Endothelial cell of umbilical vein (primary cell): ENCODE measurements at regions of chr1 and their contacts with region 1.

Region 1: GRCh38 chr1:236795035-236795756 is at the start of gene MTR:
- DNase-seq: peak; percentile 98
- H3K4me3 ChIP-seq: peak within 1 kb of the TSS; percentile 50 to 92 (median 85)
- H3K27ac ChIP-seq: peak within 1 kb of the TSS; percentile 39
- H3K4me1 ChIP-seq: peaks cover 11% of the 10 kb centered on the region
- H3K27me3 ChIP-seq: no peaks in the 10 kb centered on the region
- CTCF ChIP-seq: no peak
- POLR2A ChIP-seq: peak; percentile 89
- total RNA-seq, gene MTR: 41.8 and 45.2 TPM in 2 replicates

Region 2: GRCh38 chr1:236142253-236143103 is 652.7 kb before region 1 on chr1 and contains the start of gene GPR137B:
- CTCF ChIA-PET with region 1: no interaction called
- POLR2A ChIA-PET with region 1: no interaction called
- dilution Hi-C with region 1: no loop called
- intact Hi-C with region 1: loop called (anchors 5 kb)
- DNase-seq: peak; percentile 55
- H3K4me3 ChIP-seq: peak within 1 kb of the TSS; percentile 69 to 87 (median 85)
- H3K27ac ChIP-seq: no peak within 1 kb of the TSS
- H3K4me1 ChIP-seq: peaks cover 16% of the 10 kb centered on the region
- H3K27me3 ChIP-seq: peaks cover 10 to 14% of the 10 kb centered on the region in 2 experiments
- CTCF ChIP-seq: no peak
- POLR2A ChIP-seq: no peak
- total RNA-seq, gene GPR137B: 11.9 and 12.1 TPM in 2 replicates

Region 3: DNA sequence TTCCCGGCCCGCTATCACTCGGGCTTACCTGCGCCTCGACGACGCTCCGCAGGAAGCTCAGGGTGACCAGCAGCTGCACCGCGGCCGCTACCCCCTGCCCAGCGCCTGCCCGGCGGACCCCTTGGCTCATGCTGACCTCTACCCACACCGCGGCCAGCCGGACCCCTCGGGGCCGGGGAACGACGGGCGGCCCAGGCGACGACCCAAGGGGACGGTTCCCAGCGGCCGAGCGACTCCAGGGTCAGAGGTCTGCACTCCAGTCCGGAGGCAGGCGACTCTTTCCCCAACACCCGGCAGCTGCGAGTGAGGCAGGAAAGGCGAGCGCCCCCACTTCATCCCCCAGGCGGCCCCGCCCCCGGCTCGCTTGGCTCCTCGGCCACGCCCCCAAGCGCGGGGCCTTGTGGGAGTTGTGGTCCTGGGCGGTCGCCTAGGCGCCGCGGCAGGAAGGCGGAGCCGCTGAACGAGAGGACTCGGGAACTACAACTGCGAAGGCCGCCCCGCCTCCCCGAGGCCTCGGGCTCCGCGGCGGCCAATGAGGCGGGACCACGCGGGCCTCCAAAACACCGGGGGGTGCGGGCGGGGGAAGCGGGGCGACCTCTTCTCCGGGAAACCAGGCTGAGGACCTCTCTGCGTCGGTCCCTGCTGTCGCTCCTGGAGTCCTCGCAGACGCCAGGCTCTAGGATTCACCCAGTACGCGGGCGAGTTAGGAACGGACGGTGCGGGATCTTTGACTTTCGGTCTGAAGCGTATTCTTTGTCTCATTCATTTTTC is 513.4 kb before region 1 on chr1 and contains the start of gene ERO1B:
- CTCF ChIA-PET with region 1: no interaction called
- POLR2A ChIA-PET with region 1: no interaction called
- dilution Hi-C with region 1: no loop called
- intact Hi-C with region 1: loop called (anchors 5 kb)
- DNase-seq: peak; percentile 95
- H3K4me3 ChIP-seq: peak within 1 kb of the TSS; percentile 39 to 99 (median 65)
- H3K27ac ChIP-seq: no peak within 1 kb of the TSS
- H3K4me1 ChIP-seq: peaks cover 3% of the 10 kb centered on the region
- H3K27me3 ChIP-seq: peaks cover 16 to 22% of the 10 kb centered on the region in 2 experiments
- CTCF ChIP-seq: peak in 1 of 2 donors; percentile 2
- POLR2A ChIP-seq: peak; percentile 21
- total RNA-seq, gene ERO1B: 3.6 and 5.1 TPM in 2 replicates

Region 4: DNA sequence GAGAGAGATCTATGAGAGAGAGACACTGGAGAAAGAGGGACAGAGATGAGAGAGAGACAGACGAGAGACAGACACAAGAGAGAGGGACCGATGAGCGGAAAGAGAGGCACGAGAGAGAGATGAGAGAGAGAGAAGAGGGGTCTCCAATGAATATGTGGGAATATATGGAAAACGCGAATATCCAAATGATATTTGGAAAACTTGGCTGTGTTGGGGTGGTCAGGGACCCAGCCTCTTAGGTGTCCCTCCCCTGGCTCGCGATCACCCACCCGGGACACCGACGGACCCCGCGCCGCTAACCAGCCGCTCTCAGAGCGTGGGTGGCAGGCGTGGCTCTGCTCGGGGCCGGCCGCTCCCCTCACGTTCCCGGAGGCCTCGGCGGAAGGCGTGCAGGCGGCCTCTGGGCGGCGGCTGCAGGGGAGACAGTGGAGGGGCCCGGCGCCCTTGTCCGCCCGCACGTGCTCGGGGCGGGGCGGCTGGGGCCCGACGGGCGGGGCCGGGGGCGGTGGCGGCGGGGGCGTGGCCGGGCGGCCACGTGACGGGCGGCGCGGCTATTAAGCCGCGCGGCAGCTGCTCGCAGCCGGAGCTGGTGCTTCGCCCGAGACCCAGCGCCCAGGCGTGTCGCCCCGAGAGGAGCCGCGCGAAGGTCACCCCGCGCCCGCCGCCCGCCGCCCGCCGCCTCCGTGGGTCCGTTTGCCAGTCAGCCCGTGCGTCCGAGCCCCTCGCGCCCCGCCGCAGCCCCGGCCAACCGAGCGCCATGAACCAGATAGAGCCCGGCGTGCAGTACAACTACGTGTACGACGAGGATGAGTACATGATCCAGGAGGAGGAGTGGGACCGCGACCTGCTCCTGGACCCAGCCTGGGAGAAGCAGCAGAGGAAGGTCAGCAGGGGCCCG is 109.0 kb before region 1 on chr1 and contains the start of gene ACTN2:
- CTCF ChIA-PET with region 1: no interaction called
- POLR2A ChIA-PET with region 1: no interaction called
- dilution Hi-C with region 1: no loop called
- intact Hi-C with region 1: loop called (anchors 1 kb)
- DNase-seq: peak; percentile 31
- H3K4me3 ChIP-seq: peak within 1 kb of the TSS; percentile 19 to 62 (median 44)
- H3K27ac ChIP-seq: no peak within 1 kb of the TSS
- H3K4me1 ChIP-seq: peaks cover 7% of the 10 kb centered on the region
- H3K27me3 ChIP-seq: peaks cover 3 to 5% of the 10 kb centered on the region in 2 experiments
- CTCF ChIP-seq: no peak
- POLR2A ChIP-seq: no peak
- total RNA-seq, gene ACTN2: 0.28 and 0.55 TPM in 2 replicates

Region 5: GRCh38 chr1:236734141-236734765 is 60.9 kb before region 1 on chr1:
- CTCF ChIA-PET with region 1: no interaction called
- POLR2A ChIA-PET with region 1: no interaction called
- dilution Hi-C with region 1: no loop called
- intact Hi-C with region 1: loop called (anchors 1 kb)
- DNase-seq: peak; percentile 95
- H3K4me3 ChIP-seq: peak overlapping the region in 1 of 3 experiments; percentile 15
- H3K27ac ChIP-seq: peak overlapping the region; percentile 52
- H3K4me1 ChIP-seq: peaks cover 16% of the 10 kb centered on the region
- H3K27me3 ChIP-seq: no peaks in the 10 kb centered on the region
- CTCF ChIP-seq: no peak
- POLR2A ChIP-seq: peak; percentile 39

Region 6: GRCh38 chr1:236868625-236869467 is 73.7 kb after region 1 on chr1:
- CTCF ChIA-PET with region 1: interaction called, 5 read pairs
- POLR2A ChIA-PET with region 1: no interaction called
- dilution Hi-C with region 1: no loop called
- intact Hi-C with region 1: loop called (anchors 1 kb)
- DNase-seq: peak; percentile 69
- H3K4me3 ChIP-seq: no peak overlapping the region
- H3K27ac ChIP-seq: no peak overlapping the region
- H3K4me1 ChIP-seq: no peaks in the 10 kb centered on the region
- H3K27me3 ChIP-seq: no peaks in the 10 kb centered on the region
- CTCF ChIP-seq: peak; percentile 85 to 97
- POLR2A ChIP-seq: no peak